Activated naive CD4-positive, alpha-beta T cell treated with anti-CD3 and anti-CD28 coated beads for 36 hours (primary cell): ENCODE measurements at regions of chr3 and their contacts with region 1.

Region 1: DNA sequence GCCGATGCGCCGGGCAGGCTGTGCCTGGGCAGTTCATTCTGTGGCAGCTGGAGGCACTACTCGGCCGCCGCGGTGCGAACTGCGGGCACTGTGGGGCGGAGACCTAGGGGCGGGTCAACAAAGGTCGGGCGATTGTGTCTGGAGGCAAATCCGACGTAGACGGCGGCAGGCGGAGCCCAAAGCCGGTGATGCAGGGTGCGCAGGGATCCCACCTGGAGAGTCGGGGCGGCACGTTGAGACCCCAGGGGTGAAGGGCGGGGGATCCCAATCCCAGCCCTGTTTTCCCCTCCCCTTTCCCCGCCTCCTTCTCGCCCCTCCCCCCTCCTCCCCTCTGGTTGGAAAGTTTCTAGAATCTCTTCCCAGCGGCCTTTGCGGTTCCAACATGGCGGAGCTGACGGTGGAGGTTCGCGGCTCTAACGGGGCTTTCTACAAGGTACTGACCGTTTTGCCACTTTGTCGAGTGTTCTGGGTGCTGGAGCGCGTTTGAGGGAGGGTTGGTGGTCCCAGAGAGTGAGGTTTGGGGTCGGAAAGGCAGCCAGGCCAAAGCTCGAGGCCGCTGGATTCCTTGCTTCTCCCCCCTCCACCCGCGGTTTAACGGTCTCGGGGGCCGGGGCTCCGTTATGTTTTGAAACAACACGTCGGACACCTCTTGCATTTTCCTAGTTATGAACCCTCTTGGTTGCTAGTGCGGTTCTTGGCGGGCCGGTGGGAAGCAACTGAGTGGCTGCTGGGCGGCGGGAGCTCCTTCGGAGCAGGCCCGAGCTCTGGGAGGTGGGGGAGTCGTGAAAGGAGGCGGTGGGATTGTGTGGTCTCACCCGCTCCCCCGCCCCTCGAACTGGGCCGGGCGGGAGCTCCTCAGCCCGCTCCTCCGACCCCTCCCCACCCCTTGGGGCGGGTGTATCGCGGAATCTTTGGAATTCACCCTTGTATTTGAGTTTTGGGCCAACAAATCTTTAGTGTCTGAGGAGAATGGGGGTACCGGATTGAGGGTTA is at the start of gene FXR1:
- DNase-seq: peak; percentile 96
- H3K4me3 Mint-ChIP-seq: peak within 1 kb of the TSS; percentile 93
- H3K27ac Mint-ChIP-seq: peak within 1 kb of the TSS; percentile 98
- H3K4me1 Mint-ChIP-seq: peaks cover 57% of the 10 kb centered on the region
- H3K27me3 Mint-ChIP-seq: no peaks in the 10 kb centered on the region
- total RNA-seq, gene FXR1: 184 to 194 TPM

Region 2: GRCh38 chr3:179604321-179605078 is 1308.1 kb before region 1 on chr3 and contains the starts of genes MRPL47 and NDUFB5:
- CTCF ChIA-PET with region 1: no interaction called
- intact Hi-C with region 1: loop called (anchors 1 kb)
- DNase-seq: peak; percentile 96
- H3K4me3 Mint-ChIP-seq: peak within 1 kb of the TSS; percentile 100
- H3K27ac Mint-ChIP-seq: peak within 1 kb of the TSS; percentile 99
- H3K4me1 Mint-ChIP-seq: peaks cover 48% of the 10 kb centered on the region
- H3K27me3 Mint-ChIP-seq: no peaks in the 10 kb centered on the region
- total RNA-seq, gene MRPL47: 48.8 to 50.4 TPM
- total RNA-seq, gene NDUFB5: 148 to 151 TPM

Region 3: DNA sequence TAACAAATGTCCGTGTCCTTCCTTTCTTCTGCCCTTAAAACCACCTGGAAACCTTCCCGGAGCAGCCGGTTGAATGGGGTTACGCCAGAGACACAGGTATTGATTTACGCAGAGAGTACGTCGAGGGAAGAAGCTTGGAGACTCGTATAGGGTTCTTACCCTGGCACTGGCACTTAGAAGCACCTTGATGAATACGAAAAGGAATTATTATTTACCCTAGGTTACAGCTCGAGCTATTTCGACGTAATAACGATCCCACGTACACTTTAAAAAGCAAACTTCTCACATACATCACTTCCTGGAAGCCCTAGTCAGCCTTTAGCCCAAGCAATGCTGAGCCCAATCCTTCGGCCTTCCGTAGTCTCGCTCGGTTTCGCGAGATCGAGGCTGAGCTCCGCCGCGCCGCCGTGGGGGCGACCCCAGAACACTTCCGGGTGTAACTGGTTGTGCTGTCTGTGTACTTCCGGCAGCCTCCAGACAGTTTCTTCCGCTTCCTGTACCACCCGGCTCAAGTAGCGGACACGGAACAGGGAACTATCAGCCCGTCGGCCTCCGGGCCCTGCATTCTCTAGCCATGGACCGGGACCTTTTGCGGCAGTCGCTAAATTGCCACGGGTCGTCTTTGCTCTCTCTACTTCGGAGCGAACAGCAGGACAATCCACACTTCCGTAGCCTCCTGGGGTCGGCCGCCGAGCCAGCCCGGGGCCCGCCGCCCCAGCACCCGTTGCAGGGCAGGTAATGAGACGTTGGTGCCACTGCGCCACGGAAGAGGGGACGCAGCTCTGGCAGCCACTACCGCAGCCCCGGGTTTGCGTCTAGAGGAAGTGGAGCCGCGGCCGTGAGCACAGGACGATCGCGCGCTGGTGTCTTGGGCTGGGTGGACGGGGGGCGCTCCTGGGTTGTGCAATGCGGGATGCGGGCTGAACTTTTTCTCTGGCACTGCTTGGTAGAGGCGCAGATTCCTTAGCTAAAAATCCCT is 310.6 kb before region 1 on chr3 and contains the start of gene TTC14:
- CTCF ChIA-PET with region 1: no interaction called
- intact Hi-C with region 1: loop called (anchors 1 kb)
- DNase-seq: peak; percentile 96
- H3K4me3 Mint-ChIP-seq: peak within 1 kb of the TSS; percentile 94
- H3K27ac Mint-ChIP-seq: peak within 1 kb of the TSS; percentile 91
- H3K4me1 Mint-ChIP-seq: peaks cover 15% of the 10 kb centered on the region
- H3K27me3 Mint-ChIP-seq: peaks cover 11% of the 10 kb centered on the region
- total RNA-seq, gene TTC14: 51.7 to 52.4 TPM

Region 4: DNA sequence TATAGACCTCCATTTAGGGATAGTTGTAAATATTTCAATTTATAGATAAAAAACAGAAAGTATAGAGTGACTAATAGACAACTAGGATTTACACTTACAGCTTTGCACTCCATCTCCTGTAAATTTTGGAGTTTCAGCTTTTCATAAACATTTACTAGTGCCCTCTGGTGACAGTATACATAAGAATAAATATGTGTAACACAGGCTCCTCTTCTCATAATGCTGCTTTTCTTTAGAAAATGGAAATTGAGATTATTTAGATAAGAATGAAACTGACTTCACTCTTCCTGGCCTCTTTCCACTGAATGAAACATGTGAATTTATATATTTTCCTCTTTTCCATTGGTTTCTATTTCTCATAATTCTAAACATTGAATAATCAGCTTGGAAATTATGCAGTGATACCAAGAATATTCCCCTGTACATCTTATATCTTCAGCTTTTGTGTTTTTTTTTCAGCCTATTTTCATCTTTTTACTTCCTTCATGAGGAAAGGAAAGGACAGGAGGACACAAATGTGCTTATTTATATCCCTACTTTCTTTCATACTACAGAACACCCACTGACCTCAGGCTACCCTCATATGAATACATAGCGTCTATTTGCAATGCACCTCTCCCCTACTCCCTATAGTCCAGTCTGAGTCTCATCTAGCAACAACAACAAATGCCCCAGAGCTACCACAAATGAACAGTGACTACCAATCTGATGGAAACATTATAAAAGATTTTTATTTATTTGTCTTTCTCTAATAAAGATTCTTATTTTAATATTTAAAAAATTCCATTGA is 130.2 kb before region 1 on chr3:
- CTCF ChIA-PET with region 1: no interaction called
- intact Hi-C with region 1: no loop called
- DNase-seq: no peak
- H3K4me3 Mint-ChIP-seq: no peak overlapping the region
- H3K27ac Mint-ChIP-seq: no peak overlapping the region
- H3K4me1 Mint-ChIP-seq: no peaks in the 10 kb centered on the region
- H3K27me3 Mint-ChIP-seq: peaks cover 5% of the 10 kb centered on the region

Region 5: GRCh38 chr3:180959691-180960090 is 47.1 kb after region 1 on chr3:
- CTCF ChIA-PET with region 1: interaction called, 3 read pairs
- intact Hi-C with region 1: loop called (anchors 1 kb)
- DNase-seq: no peak
- H3K4me3 Mint-ChIP-seq: no peak overlapping the region
- H3K27ac Mint-ChIP-seq: peak overlapping the region; percentile 32
- H3K4me1 Mint-ChIP-seq: peaks cover 26% of the 10 kb centered on the region
- H3K27me3 Mint-ChIP-seq: no peaks in the 10 kb centered on the region

Region 6: GRCh38 chr3:181081935-181082334 is 169.3 kb after region 1 on chr3:
- CTCF ChIA-PET with region 1: interaction called, 3 read pairs
- intact Hi-C with region 1: loop called (anchors 5 kb)
- DNase-seq: no peak
- H3K4me3 Mint-ChIP-seq: no peak overlapping the region
- H3K27ac Mint-ChIP-seq: no peak overlapping the region
- H3K4me1 Mint-ChIP-seq: peaks cover 5% of the 10 kb centered on the region
- H3K27me3 Mint-ChIP-seq: no peaks in the 10 kb centered on the region

Region 7: DNA sequence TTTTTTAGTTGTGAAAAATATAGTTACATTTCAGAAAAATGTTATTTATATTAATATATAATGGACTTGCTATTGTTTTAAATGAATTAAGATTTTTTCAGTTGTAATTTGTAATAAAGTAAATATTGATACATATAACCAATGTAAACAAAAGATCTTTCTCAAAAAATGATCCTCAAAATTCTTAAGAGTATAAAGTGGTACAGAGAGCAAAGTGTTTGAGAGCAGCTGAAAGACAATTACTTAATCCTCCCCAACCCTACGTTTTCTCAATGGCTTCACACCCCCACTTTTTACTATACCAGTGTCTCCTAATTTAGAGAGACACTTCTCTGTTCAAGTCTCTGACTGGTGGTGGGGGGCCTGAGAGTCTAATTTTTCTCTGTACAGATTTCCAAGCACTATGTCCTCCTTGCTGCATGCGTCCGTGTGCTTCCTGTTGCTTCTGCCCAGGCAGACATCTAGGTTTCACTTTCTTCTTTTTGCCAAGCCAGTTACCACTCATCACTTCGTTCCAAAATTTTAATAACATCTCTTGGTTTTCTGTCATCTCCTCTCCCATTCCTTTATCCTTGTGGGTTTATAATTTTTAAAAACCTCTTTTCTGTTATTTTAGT is 353.2 kb after region 1 on chr3:
- CTCF ChIA-PET with region 1: no interaction called
- intact Hi-C with region 1: no loop called
- DNase-seq: no peak
- H3K4me3 Mint-ChIP-seq: peak overlapping the region; percentile 57
- H3K27ac Mint-ChIP-seq: no peak overlapping the region
- H3K4me1 Mint-ChIP-seq: peaks cover 3% of the 10 kb centered on the region
- H3K27me3 Mint-ChIP-seq: peaks cover 6% of the 10 kb centered on the region

Region 8: DNA sequence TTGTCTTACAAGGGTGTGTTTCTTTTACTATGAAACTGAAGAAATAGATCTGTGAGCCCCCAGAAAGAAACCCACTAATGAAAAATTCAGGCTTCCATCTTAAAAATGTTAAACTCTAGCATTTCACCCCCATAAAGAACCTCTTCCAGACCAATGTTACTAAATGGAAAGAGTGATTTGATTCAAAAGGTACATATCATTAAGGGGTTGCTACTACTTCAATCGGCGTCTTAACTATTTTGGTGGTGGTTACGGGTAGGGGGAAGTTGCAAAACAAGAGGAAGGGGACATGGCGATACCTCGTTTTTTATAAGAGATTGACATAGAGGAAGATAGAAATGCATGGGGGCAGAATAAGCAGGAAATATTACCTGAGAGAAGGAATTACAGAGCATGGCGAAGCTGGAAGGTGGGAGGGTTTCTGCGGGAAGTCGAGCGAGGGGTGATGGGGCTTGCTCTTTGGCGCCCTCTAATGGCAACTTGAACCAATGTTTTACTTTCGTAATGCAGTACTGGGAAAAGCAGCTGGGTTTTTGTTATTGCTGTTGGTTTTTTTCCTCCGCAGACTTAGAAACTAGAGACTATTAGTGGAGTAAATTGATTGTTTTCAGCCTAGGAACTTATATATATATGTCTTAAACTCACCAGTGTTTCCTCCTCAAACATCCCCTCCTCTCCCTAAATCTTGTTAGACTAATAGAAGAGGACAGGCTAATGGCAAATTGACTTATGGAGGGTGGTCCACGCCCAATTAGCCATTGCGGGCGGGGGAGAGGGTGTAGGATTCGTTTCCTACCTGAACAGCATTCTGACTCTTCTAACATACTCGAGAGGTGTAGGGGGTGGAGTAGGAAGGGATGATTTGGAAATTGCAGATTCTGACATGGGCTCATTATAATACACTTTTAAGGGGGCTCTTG is 787.8 kb after region 1 on chr3:
- CTCF ChIA-PET with region 1: no interaction called
- intact Hi-C with region 1: loop called (anchors 5 kb)
- DNase-seq: peak; percentile 62
- H3K4me3 Mint-ChIP-seq: peak overlapping the region; percentile 52
- H3K27ac Mint-ChIP-seq: no peak overlapping the region
- H3K4me1 Mint-ChIP-seq: peaks cover 23% of the 10 kb centered on the region
- H3K27me3 Mint-ChIP-seq: peaks cover 83% of the 10 kb centered on the region